ENCODE measurements at regions of chr5 and their contacts with region 1.

Region 1: GRCh38 chr5:37355166-37355565 is 15.7 kb downstream of the NUP155 start:
- DNase-seq: no peak
- ATAC-seq: no peak
- H3K4me3 ChIP-seq: no peak overlapping the region
- H3K27ac ChIP-seq: no peak overlapping the region
- H3K4me1 ChIP-seq: peaks cover 5% of the 10 kb centered on the region
- H3K27me3 ChIP-seq: no peaks in the 10 kb centered on the region
- CTCF ChIP-seq: no peak
- EP300 ChIP-seq: no peak
- POLR2A ChIP-seq: no peak
- RAD21 ChIP-seq: no peak

Region 2: GRCh38 chr5:37370864-37371726 is 15.9 kb after region 1 on chr5 and contains the start of gene NUP155:
- CTCF ChIA-PET with region 1: no interaction called
- POLR2A ChIA-PET with region 1: interaction called, 11 read pairs
- in situ Hi-C with region 1: no loop called
- intact Hi-C with region 1: no loop called
- DNase-seq: peak; percentile 91
- ATAC-seq: peak; percentile 93
- H3K4me3 ChIP-seq: peak within 1 kb of the TSS; percentile 79 to 100 (median 96)
- H3K27ac ChIP-seq: peak within 1 kb of the TSS; percentile 81
- H3K4me1 ChIP-seq: peaks cover 55% of the 10 kb centered on the region
- H3K27me3 ChIP-seq: peaks cover 0 to 6% of the 10 kb centered on the region in 2 experiments; a peak in 1 of 5 replicates
- CTCF ChIP-seq: peak; percentile 44
- EP300 ChIP-seq: no peak
- POLR2A ChIP-seq: peak; percentile 61 to 83
- RAD21 ChIP-seq: no peak
- total RNA-seq, gene NUP155: 57.4 and 90.7 TPM in 2 replicates

Region 3: DNA sequence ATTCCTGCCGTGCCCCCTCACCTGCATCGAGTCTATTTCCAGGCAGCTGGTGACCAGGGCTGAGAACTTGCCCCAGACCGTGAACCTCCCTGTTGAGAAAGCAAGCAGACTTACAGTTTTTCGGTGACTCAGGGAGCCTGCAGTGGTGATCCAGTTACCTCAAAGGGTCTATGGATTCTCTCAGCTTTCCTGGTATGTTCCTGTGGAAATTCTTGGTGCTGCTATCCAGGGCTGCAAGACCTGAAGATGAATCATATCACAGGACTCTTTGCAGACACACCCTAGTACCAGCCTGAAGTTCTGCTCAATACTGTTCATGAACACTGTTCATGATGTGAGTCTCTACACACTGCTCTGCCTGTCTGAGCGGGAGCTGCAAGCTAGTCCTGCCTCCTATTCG is 178.7 kb after region 1 on chr5:
- CTCF ChIA-PET with region 1: no interaction called
- POLR2A ChIA-PET with region 1: no interaction called
- in situ Hi-C with region 1: no loop called
- intact Hi-C with region 1: no loop called
- DNase-seq: no peak
- ATAC-seq: no peak
- H3K4me3 ChIP-seq: no peak overlapping the region
- H3K27ac ChIP-seq: no peak overlapping the region
- H3K4me1 ChIP-seq: no peaks in the 10 kb centered on the region
- H3K27me3 ChIP-seq: no peaks in the 10 kb centered on the region
- CTCF ChIP-seq: no peak
- EP300 ChIP-seq: no peak
- POLR2A ChIP-seq: no peak
- RAD21 ChIP-seq: no peak

Region 4: GRCh38 chr5:37847978-37848425 is 492.8 kb after region 1 on chr5:
- CTCF ChIA-PET with region 1: no interaction called
- POLR2A ChIA-PET with region 1: no interaction called
- in situ Hi-C with region 1: no loop called
- intact Hi-C with region 1: no loop called
- DNase-seq: peak; percentile 26
- ATAC-seq: no peak
- H3K4me3 ChIP-seq: no peak overlapping the region
- H3K27ac ChIP-seq: no peak overlapping the region
- H3K4me1 ChIP-seq: peaks cover 9% of the 10 kb centered on the region
- H3K27me3 ChIP-seq: peaks cover 0 to 2% of the 10 kb centered on the region in 2 experiments; a peak in 2 of 5 replicates
- CTCF ChIP-seq: no peak
- EP300 ChIP-seq: no peak
- POLR2A ChIP-seq: no peak
- RAD21 ChIP-seq: no peak